Activated CD8-positive, alpha-beta T cell treated with anti-CD3 and anti-CD28 coated beads, Interleukin-2, amount 10 ng/mL, durations not matched to agents 7 days and 5 days (primary cell): ENCODE measurements at regions of chr15 and their contacts with region 1.

Region 1: DNA sequence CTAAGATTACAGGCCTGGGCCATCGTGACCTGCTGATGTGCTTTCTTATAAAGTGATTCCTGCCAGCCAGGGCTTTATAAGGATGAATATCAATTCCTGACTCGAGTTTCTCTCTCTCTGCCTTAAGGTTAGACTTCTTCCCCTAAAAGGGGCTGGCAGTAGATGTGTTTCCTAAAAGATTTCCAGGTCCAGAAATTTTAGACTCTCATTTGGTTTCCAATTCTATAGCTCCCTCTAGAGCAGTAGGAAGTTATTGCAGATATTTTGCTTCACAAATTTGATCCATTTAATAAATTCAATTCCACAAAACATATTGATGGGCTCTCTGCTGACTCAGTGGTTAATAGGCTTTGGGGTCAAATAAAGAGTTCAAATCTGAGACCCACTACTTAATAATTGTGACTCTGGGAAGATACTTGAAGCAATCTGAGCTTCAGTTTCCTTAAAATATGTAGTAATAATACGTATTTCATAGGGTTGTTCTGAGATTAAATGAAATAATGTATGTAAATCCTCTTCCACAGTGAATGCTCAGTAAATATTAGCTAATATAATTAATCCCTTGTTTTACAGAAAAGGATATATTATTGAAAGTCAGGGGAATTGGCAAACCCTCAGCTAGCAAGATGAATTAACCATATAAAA is 2.1 kb downstream of the TRIM69 start:
- DNase-seq: no peak
- ATAC-seq: no peak
- H3K4me3 Mint-ChIP-seq: no peak overlapping the region
- H3K27ac Mint-ChIP-seq: peak overlapping the region; percentile 39
- H3K4me1 Mint-ChIP-seq: peaks cover 53% of the 10 kb centered on the region
- H3K27me3 Mint-ChIP-seq: no peaks in the 10 kb centered on the region

Region 2: DNA sequence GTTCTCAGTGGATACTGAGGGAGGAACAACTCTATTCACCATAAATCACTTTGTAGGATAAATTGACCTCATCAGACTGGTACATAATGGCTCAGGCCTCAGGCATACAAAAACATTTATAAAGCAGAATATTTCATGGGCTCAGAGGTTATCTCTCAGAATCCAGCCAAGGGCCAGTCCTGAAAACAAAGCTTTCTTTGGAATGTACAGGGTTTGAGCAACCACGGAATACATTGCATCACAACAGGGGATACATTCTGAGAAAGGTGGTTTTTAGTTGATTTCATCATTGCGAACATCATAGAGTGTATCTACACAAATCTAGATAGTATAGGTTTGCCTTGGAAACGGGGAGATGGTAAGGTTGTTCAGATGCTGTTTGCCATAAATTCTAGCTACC is 344.4 kb before region 1 on chr15:
- CTCF ChIA-PET with region 1: no interaction called
- POLR2A ChIA-PET with region 1: no interaction called
- DNase-seq: no peak
- ATAC-seq: no peak
- H3K4me3 Mint-ChIP-seq: no peak overlapping the region
- H3K27ac Mint-ChIP-seq: no peak overlapping the region
- H3K4me1 Mint-ChIP-seq: peaks cover 3% of the 10 kb centered on the region
- H3K27me3 Mint-ChIP-seq: no peaks in the 10 kb centered on the region

Region 3: GRCh38 chr15:44447772-44448376 is 290.6 kb before region 1 on chr15:
- CTCF ChIA-PET with region 1: no interaction called
- POLR2A ChIA-PET with region 1: no interaction called
- DNase-seq: no peak
- ATAC-seq: no peak
- H3K4me3 Mint-ChIP-seq: no peak overlapping the region
- H3K27ac Mint-ChIP-seq: no peak overlapping the region
- H3K4me1 Mint-ChIP-seq: peaks cover 14% of the 10 kb centered on the region
- H3K27me3 Mint-ChIP-seq: no peaks in the 10 kb centered on the region

Region 4: GRCh38 chr15:44584162-44584749 is 154.2 kb before region 1 on chr15:
- CTCF ChIA-PET with region 1: interaction called, 88 read pairs
- POLR2A ChIA-PET with region 1: no interaction called
- DNase-seq: peak; percentile 64
- ATAC-seq: peak; percentile 79
- H3K4me3 Mint-ChIP-seq: no peak overlapping the region
- H3K27ac Mint-ChIP-seq: no peak overlapping the region
- H3K4me1 Mint-ChIP-seq: peaks cover 2% of the 10 kb centered on the region
- H3K27me3 Mint-ChIP-seq: no peaks in the 10 kb centered on the region

Region 5: GRCh38 chr15:44598892-44599291 is 139.6 kb before region 1 on chr15:
- CTCF ChIA-PET with region 1: interaction called, 51 read pairs
- POLR2A ChIA-PET with region 1: interaction called, 3 read pairs
- DNase-seq: no peak
- ATAC-seq: no peak
- H3K4me3 Mint-ChIP-seq: no peak overlapping the region
- H3K27ac Mint-ChIP-seq: peak overlapping the region; percentile 73
- H3K4me1 Mint-ChIP-seq: peaks cover 31% of the 10 kb centered on the region
- H3K27me3 Mint-ChIP-seq: no peaks in the 10 kb centered on the region

Region 6: GRCh38 chr15:44663409-44664308 is 74.8 kb before region 1 on chr15 and contains the start of gene SPG11:
- CTCF ChIA-PET with region 1: interaction called, 218 read pairs
- POLR2A ChIA-PET with region 1: interaction called, 163 read pairs
- DNase-seq: peak; percentile 99
- ATAC-seq: peak; percentile 83
- H3K4me3 Mint-ChIP-seq: peak within 1 kb of the TSS; percentile 98
- H3K27ac Mint-ChIP-seq: peak within 1 kb of the TSS; percentile 95
- H3K4me1 Mint-ChIP-seq: peaks cover 50% of the 10 kb centered on the region
- H3K27me3 Mint-ChIP-seq: no peaks in the 10 kb centered on the region
- total RNA-seq, gene SPG11: 73.8 to 75.8 TPM

Region 7: DNA sequence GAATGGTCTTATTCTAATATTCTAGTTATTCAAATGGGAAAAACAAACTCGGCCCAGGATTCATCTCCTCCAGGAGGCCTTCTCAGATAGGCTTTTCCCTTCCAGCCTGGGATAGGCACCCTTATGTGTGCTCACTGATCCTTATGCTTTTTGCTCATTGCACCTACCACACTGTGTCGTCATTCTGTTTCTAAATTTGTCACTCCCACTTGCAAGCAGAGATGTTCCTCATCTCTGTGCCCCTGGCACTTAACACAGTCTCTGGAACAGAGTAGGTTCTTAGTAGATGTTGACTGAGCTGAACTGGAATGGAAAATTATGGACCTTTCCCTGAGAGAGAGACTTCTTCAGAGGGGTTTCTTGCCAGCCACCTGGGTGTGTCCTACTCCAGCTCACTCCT is 56.3 kb before region 1 on chr15:
- CTCF ChIA-PET with region 1: interaction called, 22 read pairs
- POLR2A ChIA-PET with region 1: interaction called, 22 read pairs
- DNase-seq: no peak
- ATAC-seq: no peak
- H3K4me3 Mint-ChIP-seq: peak overlapping the region; percentile 66
- H3K27ac Mint-ChIP-seq: peak overlapping the region; percentile 88
- H3K4me1 Mint-ChIP-seq: peaks cover 89% of the 10 kb centered on the region
- H3K27me3 Mint-ChIP-seq: no peaks in the 10 kb centered on the region

Region 8: GRCh38 chr15:44711356-44712107 is 26.9 kb before region 1 on chr15 and contains the start of gene B2M:
- CTCF ChIA-PET with region 1: interaction called, 301 read pairs
- POLR2A ChIA-PET with region 1: interaction called, 2,005 read pairs
- DNase-seq: peak; percentile 97
- ATAC-seq: peak; percentile 73
- H3K4me3 Mint-ChIP-seq: peak within 1 kb of the TSS; percentile 99
- H3K27ac Mint-ChIP-seq: peak within 1 kb of the TSS; percentile 96
- H3K4me1 Mint-ChIP-seq: peaks cover 39% of the 10 kb centered on the region
- H3K27me3 Mint-ChIP-seq: no peaks in the 10 kb centered on the region
- total RNA-seq, gene B2M: 6,300 to 6,473 TPM